A673 (cell line): ENCODE measurements at regions of chr6 and their contacts with region 1.

Region 1: DNA sequence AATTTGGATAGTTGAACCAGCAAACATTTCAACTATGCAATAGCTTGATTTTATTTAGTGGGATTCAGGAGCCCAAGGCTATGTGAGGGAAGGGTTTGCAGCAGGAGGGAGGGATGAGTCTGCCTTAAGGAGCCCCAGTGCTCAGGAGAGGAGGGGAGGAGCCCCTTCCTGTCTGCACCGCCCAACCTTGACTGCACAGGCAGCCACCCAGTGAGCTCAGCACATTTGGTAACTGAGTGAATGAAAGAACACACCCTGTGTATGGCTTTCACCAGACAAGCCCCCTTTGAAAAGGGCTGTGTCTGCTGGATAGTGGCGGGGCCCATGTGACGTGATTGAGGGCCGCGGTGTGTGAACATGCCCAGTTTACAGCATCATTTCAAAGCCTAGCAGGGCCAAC is 17.0 kb downstream of the DACT2 start:
- DNase-seq: peak; percentile 93
- H3K4me3 ChIP-seq: peak overlapping the region; percentile 32
- H3K27ac ChIP-seq: peak overlapping the region; percentile 92
- H3K4me1 ChIP-seq: peaks cover 36% of the 10 kb centered on the region
- H3K27me3 ChIP-seq: no peaks in the 10 kb centered on the region
- CTCF ChIP-seq: no peak

Region 2: GRCh38 chr6:168247443-168248147 is 54.9 kb before region 1 on chr6:
- CTCF ChIA-PET with region 1: no interaction called
- POLR2A ChIA-PET with region 1: no interaction called
- intact Hi-C with region 1: loop called (anchors 2 kb)
- DNase-seq: peak; percentile 86
- H3K4me3 ChIP-seq: peak overlapping the region; percentile 6
- H3K27ac ChIP-seq: peak overlapping the region; percentile 62
- H3K4me1 ChIP-seq: peaks cover 25% of the 10 kb centered on the region
- H3K27me3 ChIP-seq: no peaks in the 10 kb centered on the region
- CTCF ChIP-seq: no peak